ENCODE measurements at regions of chr10 and their contacts with region 1.

Region 1: DNA sequence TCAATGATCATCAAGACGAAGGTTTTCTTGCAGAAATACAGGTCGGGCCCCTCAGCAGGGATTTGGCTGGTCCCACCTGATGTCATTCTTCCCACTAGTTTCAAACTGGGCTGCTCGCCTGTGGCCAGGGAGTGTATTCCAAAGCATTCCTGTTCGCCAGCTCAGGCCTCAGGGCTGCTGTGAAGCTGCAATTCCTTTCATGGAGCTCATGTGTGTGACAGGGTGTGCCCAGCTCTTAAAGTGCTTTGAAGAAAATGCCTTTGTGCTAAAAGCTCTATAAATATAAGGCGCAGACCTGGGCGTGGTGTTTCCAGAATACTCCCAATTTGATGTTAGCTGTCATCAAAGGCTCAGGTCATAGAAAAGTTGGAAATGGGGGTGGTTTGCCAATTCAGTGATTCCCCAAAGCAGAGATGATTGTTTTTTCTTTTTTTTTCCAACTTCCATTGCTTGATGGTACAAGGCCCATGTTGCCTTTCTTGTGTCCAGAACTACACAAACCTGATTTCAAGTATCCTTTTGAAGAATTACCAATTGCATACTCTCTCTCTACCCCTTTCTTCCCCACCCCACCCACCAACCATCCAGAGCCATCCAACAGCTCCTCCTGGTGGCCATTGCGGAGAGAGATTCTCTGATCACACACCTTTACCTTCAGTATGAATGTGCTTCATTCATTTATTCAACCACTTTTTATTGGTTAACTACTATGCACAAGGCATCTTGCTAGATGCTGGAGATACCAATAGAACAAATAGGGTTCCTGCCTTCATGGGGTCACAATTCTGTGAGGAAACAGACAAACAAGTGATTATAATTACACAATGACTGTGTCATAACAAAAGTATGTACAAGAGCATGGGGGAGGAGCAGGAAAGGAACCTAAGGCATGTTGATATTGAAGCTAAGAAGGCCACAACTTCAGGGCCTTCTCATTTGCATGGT is 297.3 kb upstream of the LYZL1 start:
- DNase-seq: peak; percentile 85 to 90
- H3K4me3 ChIP-seq: no peak overlapping the region
- H3K4me3 Mint-ChIP-seq: no peak overlapping the region
- H3K27ac Mint-ChIP-seq: peak overlapping the region; percentile 91
- H3K4me1 ChIP-seq: peaks cover 28% of the 10 kb centered on the region
- H3K4me1 Mint-ChIP-seq: peaks cover 31% of the 10 kb centered on the region
- H3K27me3 ChIP-seq: no peaks in the 10 kb centered on the region
- H3K27me3 Mint-ChIP-seq: no peaks in the 10 kb centered on the region
- CTCF ChIP-seq: peak; percentile 95 to 96

Region 2: DNA sequence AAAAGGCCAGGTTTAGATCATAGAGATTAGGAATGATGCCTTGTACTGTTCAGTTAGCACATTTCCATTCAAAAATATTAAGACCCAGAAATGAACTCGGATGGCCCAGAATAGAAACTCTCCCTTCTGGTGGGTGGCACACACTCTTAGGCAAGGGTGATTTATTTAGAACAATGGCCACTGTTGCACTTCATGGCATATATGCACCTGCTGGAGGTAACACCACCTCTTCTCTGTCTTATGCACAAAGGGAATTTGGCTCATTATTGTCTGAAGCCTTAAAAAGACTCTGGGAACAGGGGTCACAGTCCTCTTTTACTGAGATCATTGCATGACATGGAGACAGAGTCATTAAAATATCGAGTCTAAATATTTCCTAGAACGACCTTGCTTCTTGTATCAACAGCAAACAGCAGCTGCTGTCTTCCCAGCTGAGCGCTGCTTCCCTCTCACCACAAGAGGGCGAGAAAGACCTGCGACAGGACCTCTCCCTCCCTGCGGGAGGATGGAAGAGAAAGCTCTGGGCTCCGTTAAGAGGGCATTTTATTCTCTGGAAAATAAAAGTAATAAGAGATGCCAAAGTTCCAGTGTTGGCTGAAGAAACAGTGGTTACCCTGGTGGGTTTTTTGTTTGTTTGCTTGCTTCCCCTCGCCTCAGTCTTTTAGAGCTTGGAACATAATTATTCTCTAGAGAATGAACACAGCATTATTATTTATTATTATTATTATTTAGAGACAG is 327.9 kb before region 1 on chr10:
- CTCF ChIA-PET with region 1: interaction called, 36 read pairs
- POLR2A ChIA-PET with region 1: interaction called, 4 read pairs
- intact Hi-C with region 1: loop called (anchors 1 kb)
- DNase-seq: peak; percentile 88 to 90
- H3K4me3 ChIP-seq: no peak overlapping the region
- H3K4me3 Mint-ChIP-seq: no peak overlapping the region
- H3K27ac Mint-ChIP-seq: no peak overlapping the region
- H3K4me1 ChIP-seq: peaks cover 12% of the 10 kb centered on the region
- H3K4me1 Mint-ChIP-seq: peaks cover 34% of the 10 kb centered on the region
- H3K27me3 ChIP-seq: no peaks in the 10 kb centered on the region
- H3K27me3 Mint-ChIP-seq: peaks cover 3% of the 10 kb centered on the region
- CTCF ChIP-seq: peak; percentile 99

Region 3: DNA sequence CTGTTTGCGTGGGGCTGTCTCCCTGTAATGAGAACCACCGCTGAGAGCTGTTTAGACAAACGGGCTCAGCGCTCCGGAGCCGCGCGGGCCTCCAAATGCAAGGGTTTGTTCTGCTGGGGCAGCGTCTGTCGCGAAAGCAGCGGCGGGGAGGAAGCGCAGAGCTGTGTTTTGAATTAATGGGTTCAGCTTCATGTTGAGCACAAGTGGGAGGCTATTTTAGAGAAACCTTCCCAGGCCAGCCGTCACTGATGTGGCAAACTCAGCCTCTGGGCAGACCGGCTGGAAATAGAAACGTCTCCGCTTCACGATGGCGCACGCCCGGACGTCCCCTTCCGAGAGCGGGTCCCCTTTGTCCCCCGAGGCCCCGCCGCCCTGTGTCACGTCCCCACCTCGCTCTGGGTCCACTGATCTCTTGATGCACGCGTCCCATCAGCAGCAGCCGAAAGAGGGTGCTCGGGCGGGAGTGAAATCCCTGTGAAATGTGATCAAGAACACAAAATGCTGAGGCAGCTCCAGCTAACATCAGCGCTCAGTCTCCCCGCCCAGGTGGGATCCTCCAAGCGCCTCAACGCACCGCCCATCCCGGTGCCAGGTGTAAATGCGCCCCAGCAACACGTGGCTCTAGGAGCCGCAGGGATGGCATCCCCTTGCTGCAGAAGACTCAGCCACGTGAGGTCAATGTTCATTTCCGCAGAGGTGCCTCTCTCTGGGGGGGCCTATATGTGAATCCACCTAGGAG is 269.4 kb before region 1 on chr10:
- CTCF ChIA-PET with region 1: interaction called, 6 read pairs
- POLR2A ChIA-PET with region 1: no interaction called
- intact Hi-C with region 1: loop called (anchors 1 kb)
- DNase-seq: peak; percentile 66 to 72
- H3K4me3 ChIP-seq: peak overlapping the region; percentile 68
- H3K4me3 Mint-ChIP-seq: peak overlapping the region; percentile 91
- H3K27ac Mint-ChIP-seq: peak overlapping the region; percentile 75
- H3K4me1 ChIP-seq: peaks cover 23% of the 10 kb centered on the region
- H3K4me1 Mint-ChIP-seq: peaks cover 8% of the 10 kb centered on the region
- H3K27me3 ChIP-seq: no peaks in the 10 kb centered on the region
- H3K27me3 Mint-ChIP-seq: no peaks in the 10 kb centered on the region
- CTCF ChIP-seq: peak in 1 of 2 experiments; percentile 32

Region 4: GRCh38 chr10:28883741-28884437 is 107.7 kb before region 1 on chr10:
- CTCF ChIA-PET with region 1: no interaction called
- POLR2A ChIA-PET with region 1: no interaction called
- intact Hi-C with region 1: loop called (anchors 2 kb)
- DNase-seq: no peak
- H3K4me3 ChIP-seq: no peak overlapping the region
- H3K4me3 Mint-ChIP-seq: no peak overlapping the region
- H3K27ac Mint-ChIP-seq: peak overlapping the region; percentile 35
- H3K4me1 ChIP-seq: peaks cover 44% of the 10 kb centered on the region
- H3K4me1 Mint-ChIP-seq: peaks cover 52% of the 10 kb centered on the region
- H3K27me3 ChIP-seq: no peaks in the 10 kb centered on the region
- H3K27me3 Mint-ChIP-seq: no peaks in the 10 kb centered on the region
- CTCF ChIP-seq: no peak

Region 5: GRCh38 chr10:28949005-28950004 is 42.3 kb before region 1 on chr10:
- CTCF ChIA-PET with region 1: interaction called, 4 read pairs
- POLR2A ChIA-PET with region 1: no interaction called
- intact Hi-C with region 1: loop called (anchors 1 kb)
- DNase-seq: peak; percentile 71 to 90
- H3K4me3 ChIP-seq: no peak overlapping the region
- H3K4me3 Mint-ChIP-seq: peak overlapping the region; percentile 65
- H3K27ac Mint-ChIP-seq: peak overlapping the region; percentile 99
- H3K4me1 ChIP-seq: peaks cover 24% of the 10 kb centered on the region
- H3K4me1 Mint-ChIP-seq: peaks cover 68% of the 10 kb centered on the region
- H3K27me3 ChIP-seq: no peaks in the 10 kb centered on the region
- H3K27me3 Mint-ChIP-seq: no peaks in the 10 kb centered on the region
- CTCF ChIP-seq: no peak

Region 6: DNA sequence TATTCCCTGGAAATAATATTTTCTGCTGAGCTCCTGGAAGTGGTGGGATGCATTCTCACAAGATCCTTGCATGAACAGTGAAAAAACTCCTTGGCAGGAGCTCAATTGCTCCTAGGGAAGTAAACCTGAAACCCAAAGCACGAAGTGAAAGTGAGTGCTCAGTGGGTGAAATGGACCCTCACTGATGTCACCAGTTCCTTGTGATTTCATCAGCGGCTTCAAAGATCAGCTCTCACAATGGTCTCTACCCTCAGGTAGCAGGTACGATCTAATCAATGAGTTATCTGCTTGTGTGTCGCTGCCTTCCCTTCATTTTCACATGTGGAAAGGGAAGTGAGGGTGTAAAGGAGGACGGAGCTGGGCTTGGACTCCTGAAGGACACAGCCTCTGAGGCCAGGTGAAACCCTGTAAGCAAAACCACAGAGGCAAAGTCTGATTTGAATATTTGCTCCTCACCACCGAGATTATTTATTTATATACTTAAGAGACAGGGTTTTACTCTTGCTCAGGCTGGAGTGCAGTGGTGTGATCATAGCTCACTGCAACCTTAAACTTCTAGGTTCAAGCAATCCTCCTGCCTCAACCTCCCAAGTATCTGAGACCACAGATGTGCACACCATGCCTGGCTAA is 41.8 kb after region 1 on chr10:
- CTCF ChIA-PET with region 1: no interaction called
- POLR2A ChIA-PET with region 1: no interaction called
- intact Hi-C with region 1: no loop called
- DNase-seq: no peak
- H3K4me3 ChIP-seq: no peak overlapping the region
- H3K4me3 Mint-ChIP-seq: no peak overlapping the region
- H3K27ac Mint-ChIP-seq: no peak overlapping the region
- H3K4me1 ChIP-seq: peaks cover 25% of the 10 kb centered on the region
- H3K4me1 Mint-ChIP-seq: peaks cover 16% of the 10 kb centered on the region
- H3K27me3 ChIP-seq: no peaks in the 10 kb centered on the region
- H3K27me3 Mint-ChIP-seq: no peaks in the 10 kb centered on the region
- CTCF ChIP-seq: no peak

Region 7: DNA sequence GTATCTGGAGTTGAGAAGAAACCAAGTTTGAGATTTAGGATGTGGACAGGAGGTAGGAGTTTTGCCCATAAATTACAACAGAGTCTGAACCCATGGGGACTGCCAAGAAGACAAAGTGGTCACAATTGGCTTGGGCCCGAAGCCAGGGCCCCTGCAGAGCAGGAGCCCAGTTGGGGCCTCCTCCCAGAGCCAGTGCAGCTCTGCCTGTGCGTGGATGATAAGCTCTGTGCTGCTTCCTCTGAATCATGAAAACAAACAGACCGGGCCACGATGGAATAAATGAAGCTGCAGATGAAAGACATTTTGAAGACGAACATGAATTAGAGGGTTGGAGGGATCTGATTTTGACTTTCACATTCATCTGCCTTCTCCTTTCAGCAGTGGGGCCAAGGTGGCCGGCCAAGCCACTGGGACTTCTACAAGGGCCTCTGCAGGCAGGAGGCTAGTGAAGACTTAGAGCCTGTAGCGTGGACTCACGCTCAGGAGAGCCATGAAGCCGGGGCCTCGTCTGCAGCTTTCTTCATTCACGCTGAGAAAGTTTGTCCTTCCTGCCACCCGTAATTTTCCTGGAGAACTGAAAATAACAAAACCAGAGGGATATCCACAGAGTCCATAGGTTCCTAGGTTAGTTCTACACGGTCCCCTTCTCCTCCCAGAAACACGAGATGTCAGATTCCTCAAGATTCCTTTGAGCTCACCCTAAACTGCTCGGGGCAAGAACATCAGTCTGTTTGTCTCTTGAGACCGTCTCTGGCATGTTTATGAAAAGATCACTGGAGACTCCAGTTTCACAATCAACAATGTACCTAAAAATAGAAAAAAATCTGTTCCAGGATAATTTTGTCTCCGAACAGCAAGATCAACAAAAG is 140.6 kb after region 1 on chr10:
- CTCF ChIA-PET with region 1: interaction called, 7 read pairs
- POLR2A ChIA-PET with region 1: no interaction called
- intact Hi-C with region 1: loop called (anchors 1 kb)
- DNase-seq: no peak
- H3K4me3 ChIP-seq: no peak overlapping the region
- H3K4me3 Mint-ChIP-seq: no peak overlapping the region
- H3K27ac Mint-ChIP-seq: peak overlapping the region; percentile 51
- H3K4me1 ChIP-seq: peaks cover 33% of the 10 kb centered on the region
- H3K4me1 Mint-ChIP-seq: peaks cover 15% of the 10 kb centered on the region
- H3K27me3 ChIP-seq: no peaks in the 10 kb centered on the region
- H3K27me3 Mint-ChIP-seq: no peaks in the 10 kb centered on the region
- CTCF ChIP-seq: no peak

Region 8: DNA sequence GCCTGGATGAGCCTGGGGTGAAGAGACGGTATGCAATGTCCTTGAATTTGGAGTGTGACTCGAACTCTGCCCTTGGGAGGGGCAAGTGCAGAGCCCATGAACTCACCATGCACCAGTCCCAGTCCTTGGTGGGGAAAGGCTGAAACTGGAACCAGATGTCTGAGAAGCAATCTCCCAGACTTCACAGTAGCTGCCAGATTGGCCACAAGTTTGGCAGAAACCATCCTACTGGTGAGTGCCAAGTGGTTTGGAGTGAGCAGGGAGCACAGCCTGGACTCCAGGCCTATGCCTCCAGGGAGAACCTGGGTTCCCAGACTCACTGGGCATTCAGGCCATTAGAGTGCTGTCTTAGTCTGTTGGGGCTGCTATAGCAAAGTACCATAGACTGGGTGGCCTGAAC is 197.7 kb after region 1 on chr10:
- CTCF ChIA-PET with region 1: no interaction called
- POLR2A ChIA-PET with region 1: no interaction called
- intact Hi-C with region 1: no loop called
- DNase-seq: no peak
- H3K4me3 ChIP-seq: no peak overlapping the region
- H3K4me3 Mint-ChIP-seq: no peak overlapping the region
- H3K27ac Mint-ChIP-seq: no peak overlapping the region
- H3K4me1 ChIP-seq: no peaks in the 10 kb centered on the region; the same call in 1 of the 2 replicates
- H3K4me1 Mint-ChIP-seq: peaks cover 8% of the 10 kb centered on the region
- H3K27me3 ChIP-seq: no peaks in the 10 kb centered on the region
- H3K27me3 Mint-ChIP-seq: no peaks in the 10 kb centered on the region
- CTCF ChIP-seq: no peak

Region 9: GRCh38 chr10:29304264-29305030 is 312.8 kb after region 1 on chr10:
- CTCF ChIA-PET with region 1: interaction called, 3 read pairs
- POLR2A ChIA-PET with region 1: no interaction called
- intact Hi-C with region 1: loop called (anchors 1 kb)
- DNase-seq: peak; percentile 74 to 86
- H3K4me3 ChIP-seq: no peak overlapping the region
- H3K4me3 Mint-ChIP-seq: peak overlapping the region; percentile 55
- H3K27ac Mint-ChIP-seq: peak overlapping the region; percentile 48
- H3K4me1 ChIP-seq: peaks cover 14% of the 10 kb centered on the region; the same call in 1 of the 2 replicates
- H3K4me1 Mint-ChIP-seq: no peaks in the 10 kb centered on the region
- H3K27me3 ChIP-seq: no peaks in the 10 kb centered on the region
- H3K27me3 Mint-ChIP-seq: no peaks in the 10 kb centered on the region
- CTCF ChIP-seq: peak; percentile 95 to 99

Measured in Caco-2 (cell line).